Endothelial cell of umbilical vein (primary cell): ENCODE measurements at regions of chr17 and their contacts with region 1.

Region 1: DNA sequence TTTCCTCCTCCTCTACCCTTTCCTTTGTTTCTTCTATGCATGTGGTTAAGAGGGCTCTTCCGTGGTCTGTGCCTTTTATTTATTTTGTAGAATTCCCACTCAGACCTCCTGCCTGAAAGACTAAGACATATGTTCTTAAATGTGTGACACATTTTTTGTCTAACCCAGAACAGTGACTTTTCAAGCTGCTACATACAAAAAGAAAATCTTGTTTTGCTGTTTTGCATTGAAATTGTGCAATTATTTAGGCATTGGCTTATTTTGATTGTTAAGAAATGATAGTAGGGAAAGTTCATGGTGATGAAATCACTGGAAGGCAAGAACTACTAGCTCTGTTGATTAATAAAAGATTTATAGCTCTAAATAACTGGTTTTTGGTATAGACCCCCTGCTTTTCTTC is 76.8 kb downstream of the TUBD1 start:
- DNase-seq: no peak
- H3K4me3 ChIP-seq: no peak overlapping the region
- H3K27ac ChIP-seq: no peak overlapping the region
- H3K4me1 ChIP-seq: no peaks in the 10 kb centered on the region
- H3K27me3 ChIP-seq: no peaks in the 10 kb centered on the region
- CTCF ChIP-seq: no peak
- POLR2A ChIP-seq: no peak

Region 2: GRCh38 chr17:59796785-59797205 is 19.2 kb before region 1 on chr17:
- CTCF ChIA-PET with region 1: no interaction called
- POLR2A ChIA-PET with region 1: no interaction called
- dilution Hi-C with region 1: no loop called
- intact Hi-C with region 1: no loop called
- DNase-seq: peak; percentile 65
- H3K4me3 ChIP-seq: no peak overlapping the region
- H3K27ac ChIP-seq: peak overlapping the region; percentile 61
- H3K4me1 ChIP-seq: peaks cover 25% of the 10 kb centered on the region
- H3K27me3 ChIP-seq: no peaks in the 10 kb centered on the region
- CTCF ChIP-seq: no peak
- POLR2A ChIP-seq: no peak

Region 3: DNA sequence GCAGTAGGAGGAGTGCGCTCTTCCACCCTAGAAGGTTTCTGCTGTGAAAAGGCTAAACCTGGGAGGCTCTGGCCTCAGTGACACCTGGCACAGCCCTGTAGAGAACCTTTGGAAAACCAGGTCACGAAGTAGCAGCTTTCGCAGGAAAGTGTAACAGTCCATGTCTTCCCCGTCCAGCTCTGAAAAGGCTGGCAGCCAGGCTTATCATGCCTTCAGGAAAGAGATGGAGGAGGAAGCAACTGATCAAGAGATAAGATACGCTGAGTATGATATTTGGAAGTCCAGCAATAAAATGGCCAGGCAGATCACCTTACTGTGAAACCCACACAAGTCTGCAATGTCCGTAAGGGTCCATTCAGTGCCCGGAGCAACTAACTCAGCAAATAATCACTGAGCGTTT is 54.5 kb after region 1 on chr17:
- CTCF ChIA-PET with region 1: no interaction called
- POLR2A ChIA-PET with region 1: no interaction called
- dilution Hi-C with region 1: no loop called
- intact Hi-C with region 1: loop called (anchors 1 kb)
- DNase-seq: no peak
- H3K4me3 ChIP-seq: no peak overlapping the region
- H3K27ac ChIP-seq: no peak overlapping the region
- H3K4me1 ChIP-seq: no peaks in the 10 kb centered on the region
- H3K27me3 ChIP-seq: no peaks in the 10 kb centered on the region
- CTCF ChIP-seq: no peak
- POLR2A ChIP-seq: no peak